Activated naive CD4-positive, alpha-beta T cell treated with anti-CD3 and anti-CD28 coated beads, Interleukin-2, amount 10 ng/mL, durations not matched to agents 7 days and 5 days (primary cell): ENCODE measurements at regions of chr14 and their contacts with region 1.

Region 1: GRCh38 chr14:98138666-98139065 is 1133.3 kb downstream of the BCL11B start:
- DNase-seq: peak; percentile 77
- H3K4me3 Mint-ChIP-seq: peak overlapping the region; percentile 74
- H3K27ac Mint-ChIP-seq: peak overlapping the region; percentile 96
- H3K4me1 Mint-ChIP-seq: peaks cover 89% of the 10 kb centered on the region
- H3K27me3 Mint-ChIP-seq: no peaks in the 10 kb centered on the region

Region 2: DNA sequence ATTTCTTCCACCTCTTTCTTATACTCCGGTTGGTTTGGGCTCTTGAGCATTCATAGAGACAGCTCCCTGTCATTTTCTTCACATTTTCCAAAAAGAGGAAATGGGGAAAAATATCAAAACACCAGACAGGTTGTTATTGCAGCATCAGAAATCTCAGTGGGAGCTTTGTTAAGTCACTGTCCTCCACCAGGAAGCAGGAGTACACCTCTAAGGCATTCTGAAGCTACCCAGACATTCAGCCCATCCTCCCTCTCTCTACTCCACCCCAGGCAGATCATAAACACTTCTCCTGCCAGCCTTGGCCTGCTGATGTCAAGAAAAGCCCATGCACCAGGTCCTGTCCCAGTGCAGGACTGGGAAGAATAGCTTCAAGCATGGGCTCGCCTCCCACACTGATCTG is 143.1 kb before region 1 on chr14:
- CTCF ChIA-PET with region 1: interaction called, 26 read pairs
- DNase-seq: no peak
- H3K4me3 Mint-ChIP-seq: no peak overlapping the region
- H3K27ac Mint-ChIP-seq: peak overlapping the region; percentile 93
- H3K4me1 Mint-ChIP-seq: peaks cover 47% of the 10 kb centered on the region
- H3K27me3 Mint-ChIP-seq: no peaks in the 10 kb centered on the region

Region 3: GRCh38 chr14:98182393-98183055 is 43.9 kb after region 1 on chr14:
- CTCF ChIA-PET with region 1: interaction called, 43 read pairs
- DNase-seq: peak; percentile 36
- H3K4me3 Mint-ChIP-seq: peak overlapping the region; percentile 8
- H3K27ac Mint-ChIP-seq: peak overlapping the region; percentile 90
- H3K4me1 Mint-ChIP-seq: peaks cover 93% of the 10 kb centered on the region
- H3K27me3 Mint-ChIP-seq: no peaks in the 10 kb centered on the region

Region 4: DNA sequence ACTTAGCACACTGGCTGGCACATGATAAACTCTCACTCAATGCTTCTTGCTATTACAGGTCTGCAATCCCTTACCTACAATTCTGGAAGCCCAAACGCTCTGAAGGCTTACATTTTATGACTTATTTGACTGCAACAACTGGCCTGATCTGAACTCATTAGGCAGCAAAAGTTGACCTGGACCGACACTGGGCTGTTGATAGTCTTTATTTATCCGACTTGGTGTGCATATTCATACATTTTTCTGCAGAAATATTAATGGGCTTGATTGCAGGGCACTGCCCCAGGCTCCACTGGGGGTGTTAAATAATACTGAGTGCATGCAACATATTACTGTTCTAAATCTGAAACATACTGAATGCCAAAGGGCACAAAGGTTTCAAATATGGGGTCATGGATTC is 56.6 kb after region 1 on chr14:
- CTCF ChIA-PET with region 1: interaction called, 43 read pairs
- DNase-seq: no peak
- H3K4me3 Mint-ChIP-seq: no peak overlapping the region
- H3K27ac Mint-ChIP-seq: peak overlapping the region; percentile 67
- H3K4me1 Mint-ChIP-seq: peaks cover 97% of the 10 kb centered on the region
- H3K27me3 Mint-ChIP-seq: no peaks in the 10 kb centered on the region

Region 5: GRCh38 chr14:99271951-99272631 is 1133.4 kb after region 1 on chr14 and contains the start of gene BCL11B:
- CTCF ChIA-PET with region 1: interaction called, 11 read pairs
- DNase-seq: peak; percentile 95
- H3K4me3 Mint-ChIP-seq: peak within 1 kb of the TSS; percentile 92
- H3K27ac Mint-ChIP-seq: peak within 1 kb of the TSS; percentile 99
- H3K4me1 Mint-ChIP-seq: peaks cover 35% of the 10 kb centered on the region
- H3K27me3 Mint-ChIP-seq: peaks cover 31% of the 10 kb centered on the region